Breast epithelium (tissue), 4 donors: ENCODE measurements at regions of chr3 and their contacts with region 1.

Region 1: GRCh38 chr3:71064288-71064955 is 519.1 kb downstream of the FOXP1 start:
- DNase-seq: peak in 1 of 2 donors; percentile 46
- H3K4me3 ChIP-seq: peak overlapping the region; percentile 70 to 83 (median 77)
- H3K27ac ChIP-seq: peak overlapping the region; percentile 98
- H3K4me1 ChIP-seq: no peaks in the 10 kb centered on the region
- H3K27me3 ChIP-seq: no peaks in the 10 kb centered on the region
- CTCF ChIP-seq: no peak
- POLR2A ChIP-seq: no peak

Region 2: DNA sequence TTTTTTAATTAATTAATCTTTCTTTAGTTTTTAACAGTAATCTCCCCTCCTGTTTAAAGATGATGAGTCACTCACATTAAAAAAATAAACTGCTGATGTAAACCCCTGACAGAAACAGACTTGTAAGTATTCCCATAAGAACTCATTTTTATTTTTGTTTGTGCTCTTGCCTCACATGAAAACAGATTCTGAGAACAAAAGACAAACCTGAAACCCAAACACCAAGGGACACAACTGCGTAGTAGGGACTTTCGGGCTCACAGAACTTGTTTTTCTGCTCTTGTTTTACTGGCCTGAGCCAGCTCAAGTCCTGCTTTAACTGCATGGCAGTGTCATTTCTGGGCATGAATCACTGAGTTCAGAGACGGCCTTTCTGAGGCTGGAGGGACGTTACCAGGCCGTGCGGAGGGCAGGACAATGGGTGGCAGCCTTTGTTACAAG is 81.7 kb before region 1 on chr3:
- intact Hi-C with region 1: loop called (anchors 10 kb)
- DNase-seq: peak; percentile 63 to 80
- H3K4me3 ChIP-seq: peak overlapping the region in 1 of 3 donors; percentile 37
- H3K27ac ChIP-seq: peak overlapping the region; percentile 87 to 95
- H3K4me1 ChIP-seq: peaks cover 0 to 25% of the 10 kb centered on the region in 2 donors
- H3K27me3 ChIP-seq: no peaks in the 10 kb centered on the region
- CTCF ChIP-seq: no peak
- POLR2A ChIP-seq: no peak

Region 3: GRCh38 chr3:71305231-71306206 is 241.1 kb after region 1 on chr3:
- intact Hi-C with region 1: loop called (anchors 10 kb)
- DNase-seq: peak in 1 of 2 donors; percentile 21
- H3K4me3 ChIP-seq: peak overlapping the region; percentile 14 to 59 (median 47)
- H3K27ac ChIP-seq: peak overlapping the region; percentile 76 to 83
- H3K4me1 ChIP-seq: peaks cover 0 to 10% of the 10 kb centered on the region in 2 donors
- H3K27me3 ChIP-seq: no peaks in the 10 kb centered on the region
- CTCF ChIP-seq: no peak
- POLR2A ChIP-seq: no peak